Caco-2 (cell line): ENCODE measurements at regions of chr4 and their contacts with region 1.

Region 1: DNA sequence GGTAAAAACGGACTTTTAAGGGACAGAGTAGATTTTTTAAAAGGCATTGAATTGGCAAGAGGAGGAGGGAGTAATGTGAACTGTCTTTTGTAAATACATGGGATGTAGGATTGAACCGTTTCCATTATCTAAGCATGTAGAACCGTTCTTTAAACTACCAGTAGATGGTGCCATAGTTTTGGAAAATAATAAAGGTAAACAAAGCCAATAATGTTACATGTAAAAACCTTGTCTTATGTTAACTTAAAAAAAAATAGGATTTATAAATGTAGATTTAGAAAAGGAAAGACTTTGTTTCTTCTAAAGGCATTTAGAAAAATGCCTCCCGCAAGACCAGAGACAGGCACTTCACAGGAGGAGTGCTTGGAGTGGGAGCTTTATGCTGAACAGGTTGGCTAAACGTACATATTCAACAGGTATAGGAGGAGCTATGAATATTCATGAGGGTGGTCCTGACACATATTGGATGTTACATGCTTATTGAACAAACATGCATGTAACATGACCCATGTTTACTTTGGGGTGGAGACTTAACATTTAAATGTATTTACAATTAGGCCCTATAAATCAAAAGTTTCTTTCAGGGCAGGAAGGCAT is 45.5 kb upstream of the FAM241A start:
- DNase-seq: peak in 1 of 2 experiments; percentile 38
- H3K4me3 ChIP-seq: no peak overlapping the region
- H3K4me3 Mint-ChIP-seq: no peak overlapping the region
- H3K27ac Mint-ChIP-seq: no peak overlapping the region
- H3K4me1 ChIP-seq: no peaks in the 10 kb centered on the region
- H3K4me1 Mint-ChIP-seq: no peaks in the 10 kb centered on the region
- H3K27me3 ChIP-seq: no peaks in the 10 kb centered on the region
- H3K27me3 Mint-ChIP-seq: peaks cover 4% of the 10 kb centered on the region
- CTCF ChIP-seq: peak; percentile 50 to 65

Region 2: GRCh38 chr4:112145326-112145819 is 45.6 kb after region 1 on chr4 and contains the start of gene FAM241A:
- CTCF ChIA-PET with region 1: no interaction called
- POLR2A ChIA-PET with region 1: no interaction called
- intact Hi-C with region 1: loop called (anchors 1 kb)
- DNase-seq: peak; percentile 80 to 85
- H3K4me3 ChIP-seq: peak within 1 kb of the TSS; percentile 72
- H3K4me3 Mint-ChIP-seq: peak within 1 kb of the TSS; percentile 82
- H3K27ac Mint-ChIP-seq: peak within 1 kb of the TSS; percentile 60
- H3K4me1 ChIP-seq: no peaks in the 10 kb centered on the region
- H3K4me1 Mint-ChIP-seq: peaks cover 18% of the 10 kb centered on the region
- H3K27me3 ChIP-seq: no peaks in the 10 kb centered on the region
- H3K27me3 Mint-ChIP-seq: no peaks in the 10 kb centered on the region
- CTCF ChIP-seq: no peak
- total RNA-seq, gene FAM241A: 1.0 and 1.1 TPM in 2 replicates

Region 3: DNA sequence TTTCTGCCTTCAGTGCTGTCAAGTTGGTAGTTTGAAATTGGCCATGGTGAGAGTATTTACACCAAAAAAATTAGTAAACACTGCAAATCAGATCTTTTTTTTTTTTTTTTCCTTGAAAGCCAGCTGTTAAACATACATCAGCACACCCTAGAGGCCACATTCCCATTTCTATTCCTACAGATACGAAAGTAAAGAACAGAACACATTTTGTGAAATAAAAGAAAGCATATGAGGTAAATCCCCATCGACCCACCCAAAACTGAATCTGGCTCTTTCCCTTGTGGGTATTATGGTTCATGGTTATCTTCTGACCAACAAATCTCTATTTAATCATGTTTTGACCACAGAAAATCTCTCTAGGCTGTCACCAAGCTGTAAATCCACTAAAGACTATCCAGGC is 90.0 kb after region 1 on chr4:
- CTCF ChIA-PET with region 1: interaction called, 8 read pairs
- POLR2A ChIA-PET with region 1: no interaction called
- intact Hi-C with region 1: loop called (anchors 1 kb)
- DNase-seq: no peak
- H3K4me3 ChIP-seq: no peak overlapping the region
- H3K4me3 Mint-ChIP-seq: no peak overlapping the region
- H3K27ac Mint-ChIP-seq: no peak overlapping the region
- H3K4me1 ChIP-seq: no peaks in the 10 kb centered on the region
- H3K4me1 Mint-ChIP-seq: no peaks in the 10 kb centered on the region
- H3K27me3 ChIP-seq: no peaks in the 10 kb centered on the region
- H3K27me3 Mint-ChIP-seq: no peaks in the 10 kb centered on the region
- CTCF ChIP-seq: peak in 1 of 2 experiments; percentile 21

Region 4: DNA sequence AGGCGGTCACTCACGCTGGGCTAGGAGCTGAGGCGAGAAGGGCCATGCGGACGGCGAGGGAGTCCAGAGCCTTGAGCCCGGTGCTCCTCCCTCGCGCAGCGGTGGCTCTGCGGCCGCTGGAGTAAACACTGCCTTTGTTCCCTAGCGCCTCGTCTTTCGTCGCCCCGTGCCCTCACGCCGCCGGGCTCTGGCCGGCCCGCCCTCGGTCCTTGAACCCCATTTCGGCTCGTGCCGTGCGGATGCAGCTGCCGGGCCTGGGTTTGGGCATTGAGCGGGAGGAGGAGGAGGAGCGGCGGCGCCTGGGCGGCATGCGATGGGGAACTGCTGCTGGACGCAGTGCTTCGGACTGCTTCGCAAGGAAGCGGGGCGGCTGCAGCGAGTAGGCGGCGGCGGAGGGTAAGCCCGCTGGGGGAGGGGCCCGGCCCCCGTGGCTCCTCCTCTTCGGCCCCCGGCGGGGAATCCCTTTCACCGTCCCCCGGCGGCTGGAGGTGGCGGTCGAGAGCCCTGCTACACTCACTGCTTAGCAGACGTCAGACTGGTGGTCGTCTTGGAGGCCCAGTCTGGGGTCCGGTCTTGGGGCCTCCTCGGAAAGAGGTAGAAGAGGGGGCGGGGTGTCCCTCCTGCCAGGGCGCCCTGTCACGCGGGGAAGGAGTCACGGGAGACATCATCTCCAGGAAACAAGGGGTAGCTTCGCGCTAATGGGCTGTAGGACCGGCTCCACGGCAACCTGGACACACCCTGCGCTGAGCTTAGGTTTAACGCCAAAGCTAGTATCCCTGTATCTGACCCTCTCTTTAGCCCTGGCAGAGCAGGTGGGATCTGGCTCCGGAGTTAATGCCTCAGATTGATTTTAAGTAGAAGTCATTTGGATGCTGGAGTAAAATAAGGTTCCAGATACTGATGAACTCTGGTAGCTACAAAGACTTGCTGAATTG is 132.2 kb after region 1 on chr4 and contains the start of gene AP1AR:
- CTCF ChIA-PET with region 1: interaction called, 11 read pairs
- POLR2A ChIA-PET with region 1: no interaction called
- intact Hi-C with region 1: loop called (anchors 1 kb)
- DNase-seq: peak; percentile 88 to 92
- H3K4me3 ChIP-seq: peak within 1 kb of the TSS; percentile 96
- H3K4me3 Mint-ChIP-seq: peak within 1 kb of the TSS; percentile 96
- H3K27ac Mint-ChIP-seq: peak within 1 kb of the TSS; percentile 96
- H3K4me1 ChIP-seq: peaks cover 12% of the 10 kb centered on the region; the same call in 1 of the 2 replicates
- H3K4me1 Mint-ChIP-seq: peaks cover 12% of the 10 kb centered on the region
- H3K27me3 ChIP-seq: no peaks in the 10 kb centered on the region
- H3K27me3 Mint-ChIP-seq: no peaks in the 10 kb centered on the region
- CTCF ChIP-seq: peak; percentile 36 to 56
- total RNA-seq, gene AP1AR: 19.1 and 24.0 TPM in 2 replicates

Region 5: DNA sequence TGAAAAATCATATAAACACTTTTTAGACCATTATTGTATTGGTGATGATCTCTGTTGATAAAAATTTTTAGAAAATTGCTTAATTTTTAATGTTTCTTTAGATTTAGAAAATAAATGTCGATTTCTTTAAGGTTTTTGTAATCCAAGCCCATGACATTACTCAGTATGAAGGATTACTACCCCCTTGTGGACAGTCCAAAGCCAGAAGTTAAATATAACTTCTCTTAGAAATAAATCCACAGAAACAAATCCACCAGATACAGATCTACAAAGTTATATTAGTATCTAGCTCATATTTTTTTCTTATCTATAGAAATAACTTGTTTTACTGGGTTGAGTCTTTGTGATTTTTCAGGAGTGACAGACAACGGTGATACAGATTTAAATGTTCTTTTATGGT is 167.0 kb after region 1 on chr4:
- CTCF ChIA-PET with region 1: no interaction called
- POLR2A ChIA-PET with region 1: no interaction called
- intact Hi-C with region 1: loop called (anchors 1 kb)
- DNase-seq: no peak
- H3K4me3 ChIP-seq: no peak overlapping the region
- H3K4me3 Mint-ChIP-seq: no peak overlapping the region
- H3K27ac Mint-ChIP-seq: no peak overlapping the region
- H3K4me1 ChIP-seq: no peaks in the 10 kb centered on the region
- H3K4me1 Mint-ChIP-seq: no peaks in the 10 kb centered on the region
- H3K27me3 ChIP-seq: no peaks in the 10 kb centered on the region
- H3K27me3 Mint-ChIP-seq: no peaks in the 10 kb centered on the region
- CTCF ChIP-seq: peak in 1 of 2 experiments; percentile 30

Region 6: DNA sequence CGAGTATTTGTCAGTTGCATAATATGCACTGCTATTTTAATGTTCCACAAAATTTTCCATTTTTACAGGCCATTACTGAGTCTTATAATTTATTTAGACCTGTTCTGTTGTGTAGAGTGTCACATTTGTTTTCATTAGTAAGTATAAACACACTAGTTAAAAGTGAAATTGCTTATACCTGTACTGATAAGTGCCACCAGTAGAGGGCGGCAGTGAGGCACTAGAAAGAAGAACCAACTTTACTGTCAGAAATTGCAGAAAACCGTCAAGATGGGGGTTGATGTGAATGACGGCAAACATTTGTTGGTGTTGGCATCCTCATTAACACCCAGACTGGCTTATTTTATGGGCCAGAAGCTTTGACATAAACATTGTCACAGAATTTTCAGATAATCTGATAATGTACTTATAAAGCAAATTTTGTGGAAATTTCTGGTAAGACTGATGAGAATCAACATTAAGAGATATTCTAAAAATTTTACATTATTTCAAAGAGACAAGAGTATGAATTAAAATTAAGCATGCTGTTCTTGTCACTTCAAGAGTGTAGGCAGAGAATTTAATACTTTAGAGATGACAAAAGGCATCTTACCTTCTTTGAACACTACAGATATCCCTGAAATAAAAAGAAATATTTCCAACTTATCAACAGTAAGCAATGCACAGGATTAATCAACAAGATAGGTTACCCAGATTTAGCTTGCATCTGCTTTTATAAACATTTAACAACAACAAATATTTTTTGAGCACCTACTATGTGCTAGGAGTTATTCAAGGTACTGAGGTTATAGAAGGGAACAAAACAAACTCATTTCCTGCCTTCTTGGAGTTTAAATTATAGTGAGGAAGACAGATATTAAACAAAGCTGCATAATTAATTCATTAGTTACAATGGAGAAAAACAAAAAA is 222.2 kb after region 1 on chr4:
- CTCF ChIA-PET with region 1: no interaction called
- POLR2A ChIA-PET with region 1: no interaction called
- intact Hi-C with region 1: loop called (anchors 1 kb)
- DNase-seq: peak; percentile 45 to 57
- H3K4me3 ChIP-seq: no peak overlapping the region
- H3K4me3 Mint-ChIP-seq: no peak overlapping the region
- H3K27ac Mint-ChIP-seq: no peak overlapping the region
- H3K4me1 ChIP-seq: no peaks in the 10 kb centered on the region
- H3K4me1 Mint-ChIP-seq: no peaks in the 10 kb centered on the region
- H3K27me3 ChIP-seq: no peaks in the 10 kb centered on the region
- H3K27me3 Mint-ChIP-seq: no peaks in the 10 kb centered on the region
- CTCF ChIP-seq: peak; percentile 75 to 77